ENCODE measurements at regions of chr10 and their contacts with region 1.

Region 1: DNA sequence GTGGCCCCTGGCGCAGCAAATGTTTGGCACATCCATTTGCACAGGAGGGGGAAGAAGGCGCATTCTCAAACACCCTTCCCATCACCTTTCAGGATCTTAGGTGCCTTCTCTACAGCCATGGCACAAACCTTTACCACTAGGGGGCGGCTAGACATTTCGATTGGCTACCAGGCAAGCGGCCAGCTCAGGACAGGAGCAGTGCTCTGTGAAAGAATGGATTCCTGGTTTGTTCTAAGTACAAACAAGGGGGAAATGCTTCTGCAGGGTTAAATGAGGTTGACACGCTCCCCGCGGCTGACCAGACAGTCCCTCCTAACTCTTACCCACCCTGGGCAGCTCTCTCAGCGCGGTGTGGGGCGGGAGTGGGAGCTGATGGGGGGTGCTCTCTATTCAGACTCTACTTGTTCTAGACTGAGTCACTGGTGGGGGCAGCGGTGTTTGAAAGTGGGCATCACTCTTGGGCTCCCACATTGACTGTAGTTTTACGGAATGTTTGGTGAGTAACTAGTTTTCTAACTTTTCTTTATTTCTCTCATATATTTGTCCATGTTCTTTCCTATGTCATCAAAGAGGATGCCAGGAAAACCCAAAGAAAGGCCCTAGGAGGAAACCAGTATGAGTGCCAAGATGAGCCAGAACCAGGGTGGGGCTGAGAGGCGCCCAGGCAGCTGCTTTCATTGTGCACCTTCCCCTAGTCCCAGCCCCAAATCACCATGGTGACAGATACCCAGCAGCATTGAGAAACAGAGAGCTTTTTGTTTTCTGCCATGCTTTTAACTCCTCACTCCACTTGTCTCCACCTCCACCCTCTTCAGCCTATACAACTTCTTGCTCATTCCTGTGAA is 61.4 kb upstream of the GPR158 start:
- DNase-seq: peak; percentile 67 to 69
- H3K4me3 ChIP-seq: no peak overlapping the region
- H3K27ac ChIP-seq: no peak overlapping the region
- H3K4me1 ChIP-seq: peaks cover 14% of the 10 kb centered on the region
- H3K27me3 ChIP-seq: no peaks in the 10 kb centered on the region
- CTCF ChIP-seq: peak; percentile 80

Region 2: DNA sequence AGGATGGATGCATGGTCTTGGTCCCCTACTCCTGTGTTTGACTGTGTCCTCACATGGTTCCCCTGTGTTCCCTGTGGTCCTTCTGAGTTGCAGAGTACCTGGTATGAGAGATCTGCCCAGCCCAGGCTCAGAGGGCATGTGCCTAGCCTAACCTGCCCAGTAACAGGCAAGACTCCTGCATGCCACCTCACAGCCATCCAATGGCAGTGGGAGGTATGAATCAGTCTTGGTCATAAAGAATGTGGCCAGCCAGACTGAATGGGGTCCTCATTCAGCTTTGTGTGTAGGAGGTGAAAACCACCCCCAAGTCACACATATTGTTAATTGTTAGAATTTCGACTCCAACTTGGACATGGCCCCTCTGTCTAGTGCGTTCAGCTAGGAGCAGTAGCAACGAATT is 44.2 kb after region 1 on chr10:
- CTCF ChIA-PET with region 1: no interaction called
- POLR2A ChIA-PET with region 1: no interaction called
- intact Hi-C with region 1: no loop called
- DNase-seq: no peak
- H3K4me3 ChIP-seq: no peak overlapping the region
- H3K27ac ChIP-seq: no peak overlapping the region
- H3K4me1 ChIP-seq: no peaks in the 10 kb centered on the region
- H3K27me3 ChIP-seq: no peaks in the 10 kb centered on the region
- CTCF ChIP-seq: no peak

Region 3: DNA sequence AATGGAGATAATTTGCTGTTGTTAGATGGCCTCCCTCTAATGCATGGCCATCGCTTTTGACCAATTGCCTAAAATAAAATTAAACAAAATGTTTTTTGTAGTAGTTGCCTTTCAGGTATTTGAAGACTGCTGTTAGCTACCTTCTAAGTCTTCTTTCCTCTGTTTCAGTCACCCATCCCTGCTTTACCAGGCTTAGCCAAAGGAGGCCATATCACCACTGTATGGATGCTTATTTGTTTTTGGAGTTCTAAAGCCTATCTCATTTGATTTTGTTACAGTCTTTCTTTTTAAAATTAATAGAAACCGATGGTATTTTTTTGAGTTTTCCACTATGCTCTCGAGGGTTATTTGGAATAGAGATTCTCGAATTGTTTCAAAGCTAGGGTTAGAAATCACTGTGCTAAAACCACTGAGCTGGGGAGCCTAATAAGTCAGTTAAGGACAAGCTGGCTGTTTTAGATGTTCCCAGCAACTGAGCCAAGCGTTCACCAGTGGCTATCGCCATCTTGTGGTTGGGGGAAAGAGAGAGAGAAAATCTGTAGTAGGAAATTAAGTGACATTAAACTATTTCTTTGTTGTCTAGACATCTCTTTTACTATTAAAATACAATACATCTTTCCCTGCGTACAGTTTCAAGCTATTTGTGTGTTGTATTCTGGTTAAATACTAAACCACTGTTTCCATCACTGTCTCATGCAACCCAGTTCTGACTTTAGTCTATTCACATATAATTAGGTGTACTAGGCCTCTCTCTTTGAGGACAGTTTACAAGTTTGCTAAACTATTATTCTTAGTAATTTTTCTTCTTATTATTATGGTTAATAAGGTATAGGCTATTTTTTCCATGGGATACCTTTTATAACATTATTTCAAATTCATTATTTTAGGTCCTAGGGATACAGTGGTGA is 113.6 kb after region 1 on chr10:
- CTCF ChIA-PET with region 1: no interaction called
- POLR2A ChIA-PET with region 1: no interaction called
- intact Hi-C with region 1: loop called (anchors 1 kb)
- DNase-seq: peak in 1 of 2 experiments; percentile 23
- H3K4me3 ChIP-seq: no peak overlapping the region
- H3K27ac ChIP-seq: no peak overlapping the region
- H3K4me1 ChIP-seq: no peaks in the 10 kb centered on the region
- H3K27me3 ChIP-seq: no peaks in the 10 kb centered on the region
- CTCF ChIP-seq: peak; percentile 68

Region 4: GRCh38 chr10:25493122-25494009 is 380.0 kb after region 1 on chr10:
- CTCF ChIA-PET with region 1: no interaction called
- POLR2A ChIA-PET with region 1: no interaction called
- intact Hi-C with region 1: loop called (anchors 10 kb)
- DNase-seq: peak; percentile 55 to 89
- H3K4me3 ChIP-seq: no peak overlapping the region
- H3K27ac ChIP-seq: peak overlapping the region; percentile 96
- H3K4me1 ChIP-seq: peaks cover 34% of the 10 kb centered on the region
- H3K27me3 ChIP-seq: no peaks in the 10 kb centered on the region
- CTCF ChIP-seq: no peak

Region 5: GRCh38 chr10:25627606-25628005 is 514.2 kb after region 1 on chr10:
- CTCF ChIA-PET with region 1: no interaction called
- POLR2A ChIA-PET with region 1: no interaction called
- intact Hi-C with region 1: no loop called
- DNase-seq: no peak
- H3K4me3 ChIP-seq: no peak overlapping the region
- H3K27ac ChIP-seq: no peak overlapping the region
- H3K4me1 ChIP-seq: no peaks in the 10 kb centered on the region
- H3K27me3 ChIP-seq: no peaks in the 10 kb centered on the region
- CTCF ChIP-seq: no peak

Region 6: DNA sequence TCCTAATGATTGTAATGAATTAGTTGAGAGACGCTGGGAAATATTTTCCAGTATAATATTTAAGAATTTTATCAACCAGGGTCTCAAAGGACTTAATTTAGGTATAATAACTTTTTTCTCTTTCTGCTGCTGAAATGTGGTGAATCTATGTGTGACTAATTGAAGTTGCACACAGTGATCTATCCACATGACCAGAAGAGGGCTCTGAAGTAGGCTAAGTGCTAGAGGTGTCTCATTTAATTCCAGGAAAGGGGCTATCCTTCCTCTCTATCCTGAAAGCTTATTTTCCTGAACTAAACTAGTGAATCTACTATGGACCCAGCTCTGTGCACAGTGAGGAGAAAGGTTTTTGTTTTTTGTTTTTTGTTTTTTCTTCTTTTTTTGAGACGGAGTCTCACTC is 526.2 kb after region 1 on chr10:
- CTCF ChIA-PET with region 1: no interaction called
- POLR2A ChIA-PET with region 1: no interaction called
- intact Hi-C with region 1: loop called (anchors 2 kb)
- DNase-seq: no peak
- H3K4me3 ChIP-seq: no peak overlapping the region
- H3K27ac ChIP-seq: no peak overlapping the region
- H3K4me1 ChIP-seq: no peaks in the 10 kb centered on the region
- H3K27me3 ChIP-seq: no peaks in the 10 kb centered on the region
- CTCF ChIP-seq: no peak

Region 7: GRCh38 chr10:25682203-25682851 is 568.9 kb after region 1 on chr10:
- CTCF ChIA-PET with region 1: interaction called, 5 read pairs
- POLR2A ChIA-PET with region 1: no interaction called
- intact Hi-C with region 1: loop called (anchors 1 kb)
- DNase-seq: no peak
- H3K4me3 ChIP-seq: peak overlapping the region; percentile 43; the same call in 1 of the 2 replicates
- H3K27ac ChIP-seq: no peak overlapping the region
- H3K4me1 ChIP-seq: no peaks in the 10 kb centered on the region
- H3K27me3 ChIP-seq: no peaks in the 10 kb centered on the region
- CTCF ChIP-seq: peak; percentile 40; the same call in 1 of the 2 replicates